ENCODE measurements at regions of chr1 and their contacts with region 1.

Region 1: GRCh38 chr1:94061513-94062443 is 59.2 kb downstream of the ABCA4 start:
- DNase-seq: peak; percentile 57
- H3K4me3 ChIP-seq: no peak overlapping the region
- H3K27ac ChIP-seq: peak overlapping the region; percentile 33
- H3K27me3 ChIP-seq: no peaks in the 10 kb centered on the region
- CTCF ChIP-seq: peak; percentile 97

Region 2: DNA sequence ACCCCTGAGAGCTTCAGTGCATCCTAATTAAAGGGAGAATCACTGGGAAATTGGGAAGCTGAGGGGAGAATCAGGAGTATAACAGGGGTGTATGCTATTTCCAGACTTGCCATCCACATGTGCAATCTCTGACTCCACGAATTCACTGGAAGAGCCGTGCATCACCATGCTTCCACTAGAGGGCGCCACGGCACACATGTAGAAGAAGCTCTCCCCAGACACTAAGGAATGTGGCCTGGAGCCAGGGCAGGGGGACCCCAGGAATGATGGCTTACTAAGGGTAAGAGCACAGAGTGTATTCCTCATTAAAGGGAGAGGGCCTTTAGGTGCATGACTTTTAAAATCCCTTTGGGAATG is 22.3 kb before region 1 on chr1:
- CTCF ChIA-PET with region 1: interaction called, 56 read pairs
- POLR2A ChIA-PET with region 1: no interaction called
- DNase-seq: no peak
- H3K4me3 ChIP-seq: no peak overlapping the region
- H3K27ac ChIP-seq: no peak overlapping the region
- H3K27me3 ChIP-seq: no peaks in the 10 kb centered on the region
- CTCF ChIP-seq: peak; percentile 83

Region 3: DNA sequence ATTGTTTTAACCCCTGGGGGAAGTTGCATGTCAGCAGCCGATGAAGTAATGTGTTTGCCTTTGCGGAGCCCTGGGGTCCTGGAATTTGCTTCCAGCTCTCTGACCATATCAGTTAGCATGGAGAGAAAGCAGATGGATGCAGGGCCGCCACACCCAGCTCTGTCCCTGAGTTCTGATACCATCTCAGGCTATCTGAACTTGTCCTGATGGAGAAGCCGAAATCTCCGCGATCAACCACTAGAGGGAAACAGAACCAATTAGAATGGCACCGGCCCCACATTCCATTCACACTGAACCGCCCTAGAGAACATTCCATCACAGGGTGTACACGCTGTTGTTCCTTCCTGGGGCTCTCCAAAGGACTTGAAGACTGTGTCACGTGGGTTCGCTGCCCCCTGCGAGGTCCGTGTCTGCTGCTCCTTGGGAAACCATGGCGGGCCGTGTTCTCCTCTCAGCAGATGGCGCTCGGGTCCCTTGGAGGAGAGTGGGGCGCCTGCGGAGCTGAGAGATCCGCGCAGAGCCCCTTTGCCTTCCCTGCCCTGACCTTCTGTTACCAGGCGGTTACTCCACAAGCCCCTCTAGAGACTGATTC is 16.2 kb before region 1 on chr1:
- CTCF ChIA-PET with region 1: interaction called, 56 read pairs
- POLR2A ChIA-PET with region 1: no interaction called
- DNase-seq: peak; percentile 83
- H3K4me3 ChIP-seq: peak overlapping the region; percentile 11; the same call in 1 of the 2 replicates
- H3K27ac ChIP-seq: peak overlapping the region; percentile 84
- H3K27me3 ChIP-seq: no peaks in the 10 kb centered on the region
- CTCF ChIP-seq: peak; percentile 69

Region 4: DNA sequence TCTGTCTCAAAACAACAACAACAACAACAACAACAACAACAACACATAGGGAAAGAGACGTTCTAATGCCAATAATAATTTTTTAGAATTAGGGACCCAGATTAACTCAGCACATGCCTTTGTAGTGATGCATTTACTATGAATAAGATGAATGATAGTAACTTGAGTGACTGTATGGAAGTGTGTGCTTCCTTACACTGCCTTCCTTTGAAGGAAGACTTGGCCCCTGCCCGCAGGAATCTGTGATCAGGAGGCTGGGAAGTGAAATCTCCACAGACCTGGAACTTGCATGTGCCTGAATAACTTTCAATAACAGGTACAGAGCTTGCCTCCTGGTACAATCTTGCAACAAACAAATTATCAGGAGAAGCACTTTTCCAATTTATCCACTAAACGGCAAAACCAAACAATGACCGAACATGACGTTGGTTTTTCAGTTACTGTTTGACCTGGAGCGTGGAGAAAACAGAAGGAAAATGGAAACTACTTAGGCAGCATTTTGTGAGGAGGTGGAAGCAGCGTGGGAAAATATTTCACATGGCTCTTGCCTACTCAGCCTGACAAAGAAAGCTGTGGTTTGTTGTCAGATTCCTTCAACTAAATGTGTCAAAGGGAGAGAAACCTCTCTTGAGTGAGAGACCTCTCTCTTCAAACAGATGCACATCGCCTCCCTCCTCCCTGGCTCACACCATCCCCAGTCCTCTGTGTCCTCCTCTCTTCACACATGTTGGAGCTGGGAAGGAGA is 69.2 kb after region 1 on chr1:
- CTCF ChIA-PET with region 1: no interaction called
- POLR2A ChIA-PET with region 1: interaction called, 13 read pairs
- DNase-seq: no peak
- H3K4me3 ChIP-seq: no peak overlapping the region
- H3K27ac ChIP-seq: no peak overlapping the region
- H3K27me3 ChIP-seq: no peaks in the 10 kb centered on the region
- CTCF ChIP-seq: no peak

Region 5: GRCh38 chr1:94180650-94181049 is 118.9 kb after region 1 on chr1:
- CTCF ChIA-PET with region 1: interaction called, 10 read pairs
- POLR2A ChIA-PET with region 1: no interaction called
- DNase-seq: no peak
- H3K4me3 ChIP-seq: no peak overlapping the region
- H3K27ac ChIP-seq: no peak overlapping the region
- H3K27me3 ChIP-seq: no peaks in the 10 kb centered on the region
- CTCF ChIP-seq: no peak

Region 6: DNA sequence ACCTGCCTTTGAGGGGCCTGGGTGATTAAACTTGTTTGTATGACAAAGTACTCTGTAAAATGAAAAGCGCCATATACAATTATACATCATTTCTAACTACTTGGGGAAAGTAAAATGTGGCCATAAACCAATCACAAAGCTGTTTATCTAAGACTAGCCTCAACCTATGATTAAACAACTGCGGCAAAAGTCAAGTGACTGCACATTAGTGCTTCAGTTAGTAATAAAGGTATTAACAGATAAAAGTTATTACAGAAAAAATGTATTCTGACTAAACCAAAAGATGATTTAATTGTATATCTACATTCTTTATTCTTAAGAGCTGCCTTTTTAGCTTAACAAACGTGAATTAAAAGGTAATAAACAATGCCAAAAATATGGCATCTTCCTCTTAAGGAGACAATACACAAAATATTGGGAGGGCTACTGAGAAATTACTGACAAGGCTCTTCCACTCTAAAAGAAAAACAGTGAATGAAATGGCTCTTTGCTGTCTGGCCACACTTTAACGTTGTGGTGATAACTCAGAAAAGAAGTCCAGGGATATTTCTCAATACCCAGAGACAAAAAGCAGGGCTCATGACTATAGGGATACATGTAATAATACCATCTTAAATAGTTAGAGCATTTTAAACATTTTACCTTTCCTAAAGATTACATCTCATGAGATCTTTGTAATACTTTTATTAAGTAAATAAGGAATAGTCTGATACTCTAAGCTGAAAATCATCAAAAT is 167.0 kb after region 1 on chr1:
- CTCF ChIA-PET with region 1: interaction called, 16 read pairs
- POLR2A ChIA-PET with region 1: no interaction called
- DNase-seq: no peak
- H3K4me3 ChIP-seq: no peak overlapping the region
- H3K27ac ChIP-seq: no peak overlapping the region
- H3K27me3 ChIP-seq: no peaks in the 10 kb centered on the region
- CTCF ChIP-seq: no peak

Region 7: GRCh38 chr1:94329986-94330385 is 268.2 kb after region 1 on chr1:
- CTCF ChIA-PET with region 1: interaction called, 258 read pairs
- POLR2A ChIA-PET with region 1: interaction called, 6 read pairs
- DNase-seq: no peak
- H3K4me3 ChIP-seq: no peak overlapping the region
- H3K27ac ChIP-seq: no peak overlapping the region
- H3K27me3 ChIP-seq: no peaks in the 10 kb centered on the region
- CTCF ChIP-seq: peak; percentile 68